Naive thymus-derived CD4-positive, alpha-beta T cell (primary cell): ENCODE measurements at regions of chr12 and their contacts with region 1.

Region 1: GRCh38 chr12:30754709-30755394 is at the start of gene CAPRIN2:
- DNase-seq: peak; percentile 89 to 97 (median 92)
- ATAC-seq: peak; percentile 96
- H3K4me3 ChIP-seq: peak within 1 kb of the TSS; percentile 67
- H3K4me3 Mint-ChIP-seq: peak within 1 kb of the TSS; percentile 93 to 99 (median 96)
- H3K27ac ChIP-seq: peak within 1 kb of the TSS; percentile 63
- H3K27ac Mint-ChIP-seq: peak within 1 kb of the TSS; percentile 80 to 93 (median 90)
- H3K4me1 ChIP-seq: peaks cover 13 to 29% of the 10 kb centered on the region in 2 donors
- H3K4me1 Mint-ChIP-seq: peaks cover 22 to 53% (median 46%) of the 10 kb centered on the region in 7 donors
- H3K27me3 ChIP-seq: no peaks in the 10 kb centered on the region
- H3K27me3 Mint-ChIP-seq: no peaks in the 10 kb centered on the region
- total RNA-seq, gene CAPRIN2: 13.7 to 50.1 (median 28.9) TPM

Region 2: DNA sequence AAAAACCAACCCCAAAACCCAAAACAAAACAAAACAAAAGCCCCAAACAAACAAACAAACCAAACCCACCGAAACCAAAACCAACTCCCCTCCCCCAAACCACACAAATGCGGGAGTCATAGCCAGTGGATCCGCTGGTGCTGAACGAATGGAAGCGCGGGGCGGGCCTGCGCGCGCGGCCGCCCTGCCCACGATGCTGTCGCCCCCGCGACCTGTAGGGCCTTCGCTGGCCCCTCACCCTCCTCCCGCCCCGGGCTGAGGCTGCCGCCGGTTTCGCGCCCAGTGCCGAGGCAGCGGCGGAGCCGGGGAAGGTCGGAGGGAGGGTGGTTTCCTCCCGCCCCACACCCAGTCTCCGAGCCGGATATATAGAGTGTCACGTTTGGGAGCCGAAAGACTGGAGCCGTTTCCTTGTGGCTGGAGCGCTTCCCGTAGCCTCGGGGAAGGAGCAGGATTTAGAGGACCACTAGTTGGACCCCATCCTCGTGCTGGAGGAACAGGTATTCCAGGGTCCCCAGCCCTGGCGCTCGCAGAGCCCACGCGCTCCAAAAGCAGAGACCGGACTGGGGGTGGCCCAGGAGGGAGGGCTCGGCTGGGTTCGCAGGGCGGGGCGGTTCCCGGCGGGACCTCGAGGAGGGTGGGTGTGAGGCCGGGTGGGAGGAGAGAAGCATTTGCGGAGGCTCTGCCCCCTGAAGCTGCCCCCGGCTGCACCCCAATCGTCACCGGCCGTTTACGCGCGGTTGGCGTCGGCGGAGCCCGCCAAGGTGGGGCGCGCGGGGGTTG is 1605.8 kb before region 1 on chr12 and contains the start of gene FAR2:
- CTCF ChIA-PET with region 1: no interaction called
- POLR2A ChIA-PET with region 1: no interaction called
- intact Hi-C with region 1: loop called in 1 of 2 experiments (anchors 2 kb)
- DNase-seq: peak; percentile 20 to 58 (median 33)
- ATAC-seq: peak; percentile 78
- H3K4me3 ChIP-seq: peak within 1 kb of the TSS; percentile 88
- H3K4me3 Mint-ChIP-seq: peak within 1 kb of the TSS; percentile 87 to 96 (median 92)
- H3K27ac ChIP-seq: peak within 1 kb of the TSS; percentile 37
- H3K27ac Mint-ChIP-seq: peak within 1 kb of the TSS; percentile 36 to 94 (median 74)
- H3K4me1 ChIP-seq: peaks cover 0 to 6% of the 10 kb centered on the region in 2 donors
- H3K4me1 Mint-ChIP-seq: peaks cover 14 to 31% (median 27%) of the 10 kb centered on the region in 7 donors
- H3K27me3 ChIP-seq: no peaks in the 10 kb centered on the region
- H3K27me3 Mint-ChIP-seq: peaks cover 0 to 64% (median 10%) of the 10 kb centered on the region in 5 donors
- total RNA-seq, gene FAR2: 1.1 to 11.1 (median 3.0) TPM

Region 3: DNA sequence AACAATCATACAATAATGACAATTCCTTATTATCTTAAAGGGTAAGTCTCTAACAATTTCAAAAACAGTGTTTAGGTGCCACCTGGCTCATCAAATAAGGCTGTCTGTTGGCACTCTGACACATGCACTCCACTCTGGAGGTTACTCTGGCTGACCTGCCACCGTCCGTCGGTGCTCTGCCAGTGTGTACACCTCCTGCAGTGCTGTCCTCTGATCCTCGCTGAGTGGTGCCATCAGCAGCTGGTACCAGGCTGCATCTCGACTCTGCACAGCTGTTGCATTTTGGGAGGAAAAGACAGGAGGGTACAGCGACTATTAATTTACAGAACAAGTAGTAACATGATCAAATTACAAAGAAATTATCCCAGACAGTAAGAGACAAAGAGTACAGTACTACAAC is 123.1 kb before region 1 on chr12:
- CTCF ChIA-PET with region 1: no interaction called
- POLR2A ChIA-PET with region 1: no interaction called
- intact Hi-C with region 1: no loop called
- DNase-seq: no peak
- ATAC-seq: no peak
- H3K4me3 ChIP-seq: no peak overlapping the region
- H3K4me3 Mint-ChIP-seq: no peak overlapping the region
- H3K27ac ChIP-seq: no peak overlapping the region
- H3K27ac Mint-ChIP-seq: peak overlapping the region in 3 of 9 donors; percentile 9 to 44 (median 33)
- H3K4me1 ChIP-seq: no peaks in the 10 kb centered on the region
- H3K4me1 Mint-ChIP-seq: peaks cover 0 to 4% (median 0%) of the 10 kb centered on the region in 7 donors
- H3K27me3 ChIP-seq: no peaks in the 10 kb centered on the region
- H3K27me3 Mint-ChIP-seq: no peaks in the 10 kb centered on the region

Region 4: GRCh38 chr12:30646821-30647220 is 108.0 kb before region 1 on chr12:
- CTCF ChIA-PET with region 1: no interaction called
- POLR2A ChIA-PET with region 1: no interaction called
- intact Hi-C with region 1: loop called in 1 of 2 experiments (anchors 5 kb)
- DNase-seq: no peak
- ATAC-seq: no peak
- H3K4me3 ChIP-seq: no peak overlapping the region
- H3K4me3 Mint-ChIP-seq: no peak overlapping the region
- H3K27ac ChIP-seq: no peak overlapping the region
- H3K27ac Mint-ChIP-seq: peak overlapping the region in 1 of 9 donors; percentile 6
- H3K4me1 ChIP-seq: no peaks in the 10 kb centered on the region
- H3K4me1 Mint-ChIP-seq: peaks cover 0 to 8% (median under 1%) of the 10 kb centered on the region in 7 donors
- H3K27me3 ChIP-seq: no peaks in the 10 kb centered on the region
- H3K27me3 Mint-ChIP-seq: no peaks in the 10 kb centered on the region

Region 5: DNA sequence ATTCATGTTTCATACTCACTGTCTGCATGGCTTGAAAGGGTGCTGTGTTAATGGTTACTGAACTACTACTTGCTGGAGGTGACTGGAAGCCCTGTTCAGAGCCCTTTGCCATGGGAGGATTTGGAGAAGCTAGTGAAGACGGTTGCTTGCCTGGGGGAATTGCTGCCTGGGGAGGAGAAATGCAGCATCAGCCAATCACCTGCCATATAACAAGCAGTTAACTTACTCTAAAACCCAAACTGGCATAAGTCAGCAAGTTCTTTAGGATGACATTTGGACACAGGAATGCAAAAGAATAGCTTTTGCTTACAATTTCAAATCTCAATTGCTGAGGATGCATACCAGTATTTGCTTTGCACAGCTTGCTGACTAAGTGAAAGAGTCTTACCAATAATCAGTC is 35.8 kb before region 1 on chr12:
- CTCF ChIA-PET with region 1: no interaction called
- POLR2A ChIA-PET with region 1: no interaction called
- intact Hi-C with region 1: loop called in 1 of 2 experiments (anchors 5 kb)
- DNase-seq: no peak
- ATAC-seq: no peak
- H3K4me3 ChIP-seq: no peak overlapping the region
- H3K4me3 Mint-ChIP-seq: no peak overlapping the region
- H3K27ac ChIP-seq: no peak overlapping the region
- H3K27ac Mint-ChIP-seq: no peak overlapping the region
- H3K4me1 ChIP-seq: no peaks in the 10 kb centered on the region
- H3K4me1 Mint-ChIP-seq: no peaks in the 10 kb centered on the region
- H3K27me3 ChIP-seq: no peaks in the 10 kb centered on the region
- H3K27me3 Mint-ChIP-seq: no peaks in the 10 kb centered on the region

Region 6: GRCh38 chr12:30774599-30774998 is 19.7 kb after region 1 on chr12:
- CTCF ChIA-PET with region 1: no interaction called
- POLR2A ChIA-PET with region 1: no interaction called
- intact Hi-C with region 1: no loop called
- DNase-seq: no peak
- ATAC-seq: no peak
- H3K4me3 ChIP-seq: no peak overlapping the region
- H3K4me3 Mint-ChIP-seq: no peak overlapping the region
- H3K27ac ChIP-seq: no peak overlapping the region
- H3K27ac Mint-ChIP-seq: no peak overlapping the region
- H3K4me1 ChIP-seq: no peaks in the 10 kb centered on the region
- H3K4me1 Mint-ChIP-seq: no peaks in the 10 kb centered on the region
- H3K27me3 ChIP-seq: no peaks in the 10 kb centered on the region
- H3K27me3 Mint-ChIP-seq: peaks cover 0 to 30% (median 13%) of the 10 kb centered on the region in 5 donors

Region 7: DNA sequence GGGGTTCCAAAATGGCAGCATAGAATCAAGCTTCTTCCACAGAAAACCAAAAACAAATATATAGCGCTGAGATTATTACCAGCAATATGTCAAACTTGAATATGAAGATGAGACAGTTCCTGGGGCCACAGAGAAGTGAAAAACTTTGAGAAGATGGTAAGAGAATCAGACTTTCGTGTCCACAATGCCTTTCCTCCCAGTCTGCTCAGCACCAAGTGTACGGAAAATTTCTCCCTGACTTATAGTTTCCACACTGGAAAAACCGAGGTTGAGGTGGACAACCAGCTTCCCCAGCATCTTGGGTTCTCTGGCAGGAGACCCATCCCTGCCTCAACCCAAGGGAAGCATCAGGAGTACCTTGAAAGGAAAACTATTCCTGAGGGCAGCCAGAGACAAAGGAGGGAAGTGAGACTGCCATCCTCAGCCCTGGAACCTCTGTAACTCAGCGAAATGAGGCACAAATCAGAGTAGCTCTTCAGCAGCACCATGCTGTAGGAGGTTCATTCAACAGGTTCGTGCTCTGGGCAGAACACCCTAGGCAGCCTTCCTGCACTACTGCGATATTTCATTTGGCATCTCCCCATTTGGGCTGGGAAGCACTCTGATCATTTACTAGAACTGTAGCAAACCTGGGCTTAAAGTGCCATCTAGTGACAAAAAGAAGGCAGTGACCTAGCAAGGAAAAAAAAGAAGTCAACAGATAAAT is 52.3 kb after region 1 on chr12:
- CTCF ChIA-PET with region 1: interaction called, 3 read pairs
- POLR2A ChIA-PET with region 1: interaction called, 3 read pairs
- intact Hi-C with region 1: loop called in 1 of 2 experiments (anchors 1 kb)
- DNase-seq: peak in 7 of 9 donors; percentile 20 to 61 (median 48)
- ATAC-seq: peak; percentile 63
- H3K4me3 ChIP-seq: no peak overlapping the region
- H3K4me3 Mint-ChIP-seq: no peak overlapping the region
- H3K27ac ChIP-seq: no peak overlapping the region
- H3K27ac Mint-ChIP-seq: no peak overlapping the region
- H3K4me1 ChIP-seq: no peaks in the 10 kb centered on the region
- H3K4me1 Mint-ChIP-seq: no peaks in the 10 kb centered on the region
- H3K27me3 ChIP-seq: no peaks in the 10 kb centered on the region
- H3K27me3 Mint-ChIP-seq: peaks cover 17 to 29% (median 23%) of the 10 kb centered on the region in 5 donors